ENCODE measurements at regions of chr3 and their contacts with region 1.

Region 1: DNA sequence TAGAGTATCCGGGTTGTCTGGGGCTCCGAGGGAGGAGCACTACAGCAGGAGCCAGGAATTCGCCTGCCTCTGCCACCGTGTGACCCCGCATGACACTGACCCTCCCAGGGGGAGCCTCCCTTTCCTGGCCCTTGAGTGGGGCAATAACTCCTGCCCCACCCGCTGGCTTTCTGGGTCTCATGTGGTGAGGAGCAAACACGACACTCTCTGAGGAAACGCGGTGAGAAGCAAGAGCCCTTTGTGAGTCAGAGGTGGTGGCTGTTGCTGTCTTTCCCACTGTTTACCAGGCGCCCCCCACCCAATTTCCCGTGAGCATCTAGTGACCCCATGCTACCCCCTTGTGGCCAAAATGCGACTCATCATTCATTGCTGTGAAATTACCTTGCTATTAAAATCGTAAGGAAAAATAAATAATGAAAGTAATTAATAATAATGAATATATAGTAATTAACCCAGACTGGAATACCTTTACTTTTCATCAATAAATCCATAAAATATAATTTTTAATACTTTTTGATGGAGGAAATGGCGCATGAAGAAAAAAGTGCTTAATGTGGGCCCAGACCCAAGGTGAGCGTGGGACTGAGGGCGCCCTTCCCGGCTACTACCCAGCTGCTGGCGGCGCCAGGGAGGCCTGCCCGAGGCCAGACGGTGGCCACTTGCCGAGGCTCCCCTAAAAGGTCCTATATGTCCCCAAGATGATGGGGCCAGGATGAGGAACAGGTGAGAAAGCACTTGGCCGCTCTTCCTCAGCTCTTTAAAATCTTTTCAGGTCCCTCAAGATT is 29.3 kb downstream of the CCNL1 start:
- DNase-seq: peak; percentile 60 to 89 (median 80)
- ATAC-seq: peak; percentile 74 to 77 (median 75)
- H3K4me3 ChIP-seq: peak overlapping the region in 1 of 2 donors; percentile 2
- H3K4me3 Mint-ChIP-seq: peak overlapping the region; percentile 61 to 67 (median 66)
- H3K27ac ChIP-seq: peak overlapping the region; percentile 89
- H3K27ac Mint-ChIP-seq: peak overlapping the region; percentile 98 to 99
- H3K4me1 ChIP-seq: peaks cover 23 to 65% of the 10 kb centered on the region in 2 experiments
- H3K4me1 Mint-ChIP-seq: peaks cover 60 to 76% (median 75%) of the 10 kb centered on the region in 3 donors
- H3K27me3 ChIP-seq: no peaks in the 10 kb centered on the region
- H3K27me3 Mint-ChIP-seq: no peaks in the 10 kb centered on the region

Region 2: DNA sequence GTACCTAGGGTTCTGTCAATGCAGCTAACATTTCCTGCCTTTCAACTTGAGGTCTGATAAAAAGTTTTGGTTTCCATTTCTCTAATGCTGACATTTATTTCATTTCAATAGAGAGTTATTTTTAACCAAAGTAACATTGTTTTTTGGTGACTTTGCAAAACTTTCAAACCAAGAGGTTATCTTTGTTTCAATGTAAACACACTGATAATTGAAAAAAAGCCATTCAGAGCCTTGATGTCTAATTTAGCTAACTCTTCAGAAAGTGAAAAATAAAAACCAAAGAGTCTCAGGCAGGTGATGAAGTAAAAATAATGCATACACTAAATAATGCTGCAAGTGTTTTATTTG is 465.9 kb before region 1 on chr3:
- CTCF ChIA-PET with region 1: no interaction called
- POLR2A ChIA-PET with region 1: interaction called in 1 of 2 experiments, 10 read pairs
- DNase-seq: peak in 1 of 35 experiments; percentile 26
- ATAC-seq: peak; percentile 45 to 66 (median 62)
- H3K4me3 ChIP-seq: no peak overlapping the region
- H3K4me3 Mint-ChIP-seq: peak overlapping the region; percentile 10 to 62 (median 37)
- H3K27ac ChIP-seq: peak overlapping the region; percentile 43
- H3K27ac Mint-ChIP-seq: peak overlapping the region; percentile 72 to 92
- H3K4me1 ChIP-seq: peaks cover 4 to 7% of the 10 kb centered on the region in 2 experiments
- H3K4me1 Mint-ChIP-seq: peaks cover 31 to 66% (median 47%) of the 10 kb centered on the region in 3 donors
- H3K27me3 ChIP-seq: no peaks in the 10 kb centered on the region
- H3K27me3 Mint-ChIP-seq: no peaks in the 10 kb centered on the region

Region 3: GRCh38 chr3:157081681-157082210 is 48.9 kb before region 1 on chr3:
- CTCF ChIA-PET with region 1: interaction called, 4 to 35 read pairs
- POLR2A ChIA-PET with region 1: no interaction called
- DNase-seq: peak; percentile 54 to 89 (median 77)
- ATAC-seq: peak; percentile 89 to 95 (median 93)
- H3K4me3 ChIP-seq: no peak overlapping the region
- H3K4me3 Mint-ChIP-seq: no peak overlapping the region
- H3K27ac ChIP-seq: peak overlapping the region; percentile 75
- H3K27ac Mint-ChIP-seq: peak overlapping the region; percentile 78 to 84
- H3K4me1 ChIP-seq: peaks cover 0 to 16% of the 10 kb centered on the region in 2 experiments
- H3K4me1 Mint-ChIP-seq: peaks cover 13 to 34% (median 23%) of the 10 kb centered on the region in 3 donors
- H3K27me3 ChIP-seq: peaks cover 0 to 4% of the 10 kb centered on the region in 2 experiments
- H3K27me3 Mint-ChIP-seq: no peaks in the 10 kb centered on the region

Region 4: DNA sequence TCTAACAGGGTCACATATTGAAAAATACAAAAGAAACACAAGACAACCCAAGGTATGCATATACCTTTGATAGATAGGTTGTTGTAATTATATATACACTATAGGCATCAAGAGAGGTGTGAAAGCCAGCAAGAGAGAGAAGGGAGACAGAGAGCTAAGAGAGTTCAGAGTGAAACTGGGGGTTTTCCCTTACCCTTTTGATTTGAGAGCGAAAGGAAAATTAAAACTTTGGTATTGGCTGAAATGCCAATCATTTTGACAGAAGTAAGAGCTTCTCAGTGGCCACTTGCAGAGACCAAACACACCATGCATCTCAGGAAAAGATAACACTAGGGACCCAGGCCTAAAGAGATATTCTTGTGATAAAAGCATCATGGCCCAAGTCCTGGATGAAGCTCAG is 792.0 kb after region 1 on chr3:
- CTCF ChIA-PET with region 1: no interaction called
- POLR2A ChIA-PET with region 1: no interaction called
- DNase-seq: no peak
- ATAC-seq: no peak
- H3K4me3 ChIP-seq: no peak overlapping the region
- H3K4me3 Mint-ChIP-seq: no peak overlapping the region
- H3K27ac ChIP-seq: no peak overlapping the region
- H3K27ac Mint-ChIP-seq: no peak overlapping the region
- H3K4me1 ChIP-seq: no peaks in the 10 kb centered on the region
- H3K4me1 Mint-ChIP-seq: no peaks in the 10 kb centered on the region
- H3K27me3 ChIP-seq: no peaks in the 10 kb centered on the region
- H3K27me3 Mint-ChIP-seq: no peaks in the 10 kb centered on the region

Measured in T-cell (primary cell).